Activated CD4-positive, alpha-beta T cell treated with anti-CD3 and anti-CD28 coated beads, Interleukin-2, amount 10 ng/mL, durations not matched to agents 24 days and 14 days (primary cell): ENCODE measurements at regions of chr1 and their contacts with region 1.

Region 1: DNA sequence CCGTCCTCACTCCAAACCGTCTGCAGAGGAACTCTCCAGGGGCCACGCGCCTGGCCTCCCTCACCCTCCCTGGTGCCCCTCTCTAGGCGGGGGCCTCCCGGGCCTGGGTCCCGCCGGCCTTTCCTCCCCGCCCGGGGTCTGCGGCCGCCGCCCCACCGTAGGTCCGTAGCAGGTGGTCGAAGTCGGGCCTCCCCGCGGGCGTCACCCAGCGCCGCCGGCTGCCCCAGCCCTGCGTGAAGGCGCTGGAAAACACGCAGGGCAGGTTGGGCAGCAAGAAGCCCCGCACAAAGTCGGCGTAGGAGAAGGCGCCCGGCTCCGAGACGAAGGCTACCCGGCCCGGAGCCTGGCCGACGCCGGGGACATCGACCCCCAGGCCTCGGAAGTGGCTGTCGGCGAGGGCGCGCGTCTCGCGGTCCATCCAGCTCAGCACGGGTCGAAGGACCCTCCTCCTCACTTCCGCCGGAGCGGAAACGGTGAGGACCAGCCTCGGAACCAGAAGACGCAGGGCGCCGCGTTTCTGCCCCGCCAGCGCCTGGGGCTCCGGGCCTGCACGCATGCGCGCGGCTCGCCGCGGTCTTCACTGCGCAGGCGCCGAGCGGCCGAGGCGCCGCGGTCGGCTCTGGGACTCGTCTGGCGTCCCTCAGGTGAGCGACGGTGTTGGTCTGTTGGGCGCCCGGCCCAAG is at the starts of genes JMJD4 and SNAP47:
- DNase-seq: peak; percentile 99
- H3K4me3 Mint-ChIP-seq: peak within 1 kb of the TSS; percentile 98
- H3K27ac Mint-ChIP-seq: peak within 1 kb of the TSS; percentile 93
- H3K4me1 Mint-ChIP-seq: peaks cover 26% of the 10 kb centered on the region
- H3K27me3 Mint-ChIP-seq: peaks cover 2% of the 10 kb centered on the region
- total RNA-seq, gene JMJD4: 34.8 and 35.1 TPM in 2 replicates
- total RNA-seq, gene SNAP47: 28.6 and 30.9 TPM in 2 replicates

Region 2: GRCh38 chr1:227489572-227489971 is 245.4 kb before region 1 on chr1:
- intact Hi-C with region 1: loop called (anchors 10 kb)
- DNase-seq: peak; percentile 21
- H3K4me3 Mint-ChIP-seq: no peak overlapping the region
- H3K27ac Mint-ChIP-seq: no peak overlapping the region
- H3K4me1 Mint-ChIP-seq: no peaks in the 10 kb centered on the region
- H3K27me3 Mint-ChIP-seq: no peaks in the 10 kb centered on the region

Region 3: GRCh38 chr1:227542143-227543120 is 192.6 kb before region 1 on chr1:
- intact Hi-C with region 1: loop called (anchors 2 kb)
- DNase-seq: peak; percentile 97
- H3K4me3 Mint-ChIP-seq: peak overlapping the region; percentile 48
- H3K27ac Mint-ChIP-seq: peak overlapping the region; percentile 67
- H3K4me1 Mint-ChIP-seq: peaks cover 5% of the 10 kb centered on the region
- H3K27me3 Mint-ChIP-seq: peaks cover 5% of the 10 kb centered on the region

Region 4: GRCh38 chr1:227787513-227788270 is 52.7 kb after region 1 on chr1:
- intact Hi-C with region 1: loop called (anchors 1 kb)
- DNase-seq: peak; percentile 96
- H3K4me3 Mint-ChIP-seq: peak overlapping the region; percentile 83
- H3K27ac Mint-ChIP-seq: peak overlapping the region; percentile 21
- H3K4me1 Mint-ChIP-seq: peaks cover 12% of the 10 kb centered on the region
- H3K27me3 Mint-ChIP-seq: peaks cover 9% of the 10 kb centered on the region

Region 5: GRCh38 chr1:227919906-227920305 is 184.9 kb after region 1 on chr1:
- intact Hi-C with region 1: no loop called
- DNase-seq: no peak
- H3K4me3 Mint-ChIP-seq: no peak overlapping the region
- H3K27ac Mint-ChIP-seq: no peak overlapping the region
- H3K4me1 Mint-ChIP-seq: no peaks in the 10 kb centered on the region
- H3K27me3 Mint-ChIP-seq: no peaks in the 10 kb centered on the region